Activated CD4-positive, alpha-beta T cell treated with anti-CD3 and anti-CD28 coated beads, Interleukin-2, amount 10 ng/mL, durations not matched to agents 24 days and 14 days (primary cell): ENCODE measurements at regions of chr14 and their contacts with region 1.

Region 1: GRCh38 chr14:103715052-103716000 is at the starts of genes XRCC3 and ZFYVE21:
- DNase-seq: peak; percentile 100
- H3K4me3 Mint-ChIP-seq: peak within 1 kb of the TSS; percentile 94
- H3K27ac Mint-ChIP-seq: peak within 1 kb of the TSS; percentile 93
- H3K4me1 Mint-ChIP-seq: peaks cover 37% of the 10 kb centered on the region
- H3K27me3 Mint-ChIP-seq: no peaks in the 10 kb centered on the region
- total RNA-seq, gene XRCC3: 70.3 and 75.8 TPM in 2 replicates
- total RNA-seq, gene ZFYVE21: 21.4 and 23.9 TPM in 2 replicates

Region 2: GRCh38 chr14:103301512-103302354 is 413.6 kb before region 1 on chr14:
- intact Hi-C with region 1: no loop called
- DNase-seq: no peak
- H3K4me3 Mint-ChIP-seq: no peak overlapping the region
- H3K27ac Mint-ChIP-seq: no peak overlapping the region
- H3K4me1 Mint-ChIP-seq: no peaks in the 10 kb centered on the region
- H3K27me3 Mint-ChIP-seq: peaks cover 13% of the 10 kb centered on the region

Region 3: GRCh38 chr14:103562429-103563225 is 152.7 kb before region 1 on chr14 and contains the starts of genes BAG5 and COA8:
- intact Hi-C with region 1: loop called (anchors 2 kb)
- DNase-seq: peak; percentile 96
- H3K4me3 Mint-ChIP-seq: peak within 1 kb of the TSS; percentile 100
- H3K27ac Mint-ChIP-seq: peak within 1 kb of the TSS; percentile 91
- H3K4me1 Mint-ChIP-seq: peaks cover 41% of the 10 kb centered on the region
- H3K27me3 Mint-ChIP-seq: no peaks in the 10 kb centered on the region
- total RNA-seq, gene BAG5: 32.1 and 33.9 TPM in 2 replicates
- total RNA-seq, gene COA8: 38.4 and 41.2 TPM in 2 replicates

Region 4: GRCh38 chr14:103576371-103577024 is 138.8 kb before region 1 on chr14:
- intact Hi-C with region 1: no loop called
- DNase-seq: no peak
- H3K4me3 Mint-ChIP-seq: no peak overlapping the region
- H3K27ac Mint-ChIP-seq: no peak overlapping the region
- H3K4me1 Mint-ChIP-seq: peaks cover 2% of the 10 kb centered on the region
- H3K27me3 Mint-ChIP-seq: no peaks in the 10 kb centered on the region

Region 5: DNA sequence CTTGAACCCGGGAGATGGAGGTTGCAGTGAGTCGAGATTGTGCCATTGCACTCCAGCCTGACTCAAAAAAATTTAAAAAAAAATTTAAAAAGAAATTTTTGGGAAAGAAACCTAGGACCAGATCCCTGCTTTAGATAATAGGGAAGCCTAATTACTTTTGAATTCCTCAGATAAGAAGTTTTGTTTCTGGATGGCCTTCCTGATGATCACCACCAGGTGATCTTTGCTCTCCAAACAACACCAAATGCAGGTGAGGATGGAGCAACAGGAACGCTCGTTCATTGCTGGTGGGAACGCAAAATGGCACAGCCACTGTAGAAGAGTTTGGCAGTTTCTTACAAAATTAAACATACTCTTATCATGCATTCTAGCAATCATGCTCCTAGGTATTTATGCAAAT is 114.8 kb before region 1 on chr14:
- intact Hi-C with region 1: no loop called
- DNase-seq: no peak
- H3K4me3 Mint-ChIP-seq: no peak overlapping the region
- H3K27ac Mint-ChIP-seq: no peak overlapping the region
- H3K4me1 Mint-ChIP-seq: peaks cover 2% of the 10 kb centered on the region
- H3K27me3 Mint-ChIP-seq: no peaks in the 10 kb centered on the region

Region 6: DNA sequence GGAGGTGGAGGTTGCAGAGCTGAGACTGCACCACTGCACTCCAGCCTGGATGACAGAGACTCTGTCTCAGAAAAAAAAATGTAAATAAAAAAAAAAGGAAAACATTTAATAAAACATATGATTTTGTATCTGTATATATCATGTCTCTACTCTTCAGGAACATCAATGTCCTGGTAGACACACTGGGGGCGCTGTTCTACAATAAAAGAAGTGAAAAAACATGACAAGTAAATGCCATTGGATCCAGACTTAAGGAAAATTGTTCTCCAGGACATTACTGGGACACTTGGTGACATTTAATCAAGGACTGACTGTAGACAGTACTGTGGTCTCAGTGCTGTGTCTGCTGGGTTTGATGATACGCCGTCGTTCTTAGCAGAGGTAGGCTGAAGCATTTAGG is 101.8 kb before region 1 on chr14:
- intact Hi-C with region 1: no loop called
- DNase-seq: peak; percentile 65
- H3K4me3 Mint-ChIP-seq: no peak overlapping the region
- H3K27ac Mint-ChIP-seq: no peak overlapping the region
- H3K4me1 Mint-ChIP-seq: no peaks in the 10 kb centered on the region
- H3K27me3 Mint-ChIP-seq: peaks cover 6% of the 10 kb centered on the region

Region 7: GRCh38 chr14:103628684-103629502 is 86.4 kb before region 1 on chr14 and contains the start of gene KLC1:
- intact Hi-C with region 1: loop called (anchors 2 kb)
- DNase-seq: peak; percentile 96
- H3K4me3 Mint-ChIP-seq: peak within 1 kb of the TSS; percentile 91
- H3K27ac Mint-ChIP-seq: peak within 1 kb of the TSS; percentile 95
- H3K4me1 Mint-ChIP-seq: peaks cover 27% of the 10 kb centered on the region
- H3K27me3 Mint-ChIP-seq: no peaks in the 10 kb centered on the region
- total RNA-seq, gene KLC1: 132 and 155 TPM in 2 replicates

Region 8: DNA sequence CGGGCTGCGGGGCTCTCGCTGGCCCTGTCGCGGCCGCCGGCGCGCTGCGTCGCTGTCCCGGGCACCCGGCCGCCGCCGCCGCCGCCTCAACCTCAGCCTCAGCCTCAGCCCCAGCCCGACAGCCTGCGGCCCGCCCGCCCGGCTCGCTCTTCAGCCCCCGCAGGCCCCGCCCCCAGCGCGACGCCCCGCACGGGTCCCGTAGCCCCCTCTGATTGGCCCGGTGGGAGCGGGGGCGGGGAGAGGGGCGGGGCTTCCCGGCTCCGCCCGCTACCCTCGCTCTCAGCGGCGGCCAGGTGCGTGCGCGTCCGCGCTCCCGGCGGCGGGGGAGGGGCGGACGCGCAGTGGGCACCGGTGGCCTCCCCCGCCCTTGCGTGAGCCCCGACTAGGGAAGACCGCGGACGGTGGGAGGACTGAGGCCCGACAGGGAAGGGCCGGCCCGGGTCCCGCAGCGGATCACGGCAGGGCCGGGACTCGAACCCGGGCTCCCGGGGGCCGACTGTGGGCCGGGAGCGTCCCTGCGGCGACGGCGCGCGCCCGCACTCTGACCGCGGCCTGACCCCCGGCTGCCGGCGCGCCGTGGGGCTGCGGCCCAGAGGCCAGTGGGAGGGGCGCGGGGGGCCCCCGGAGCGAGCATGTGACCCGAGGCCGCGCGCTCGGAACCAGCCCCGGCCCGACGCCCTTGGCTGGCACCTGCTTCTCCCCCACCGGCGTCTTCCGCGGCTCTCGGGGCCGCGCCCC is 132.3 kb after region 1 on chr14 and contains the start of gene PPP1R13B:
- intact Hi-C with region 1: loop called (anchors 2 kb)
- DNase-seq: peak; percentile 97
- H3K4me3 Mint-ChIP-seq: peak within 1 kb of the TSS; percentile 80
- H3K27ac Mint-ChIP-seq: peak within 1 kb of the TSS; percentile 1
- H3K4me1 Mint-ChIP-seq: peaks cover 13% of the 10 kb centered on the region
- H3K27me3 Mint-ChIP-seq: peaks cover 29% of the 10 kb centered on the region
- total RNA-seq, gene PPP1R13B: 8.6 and 8.8 TPM in 2 replicates

Region 9: DNA sequence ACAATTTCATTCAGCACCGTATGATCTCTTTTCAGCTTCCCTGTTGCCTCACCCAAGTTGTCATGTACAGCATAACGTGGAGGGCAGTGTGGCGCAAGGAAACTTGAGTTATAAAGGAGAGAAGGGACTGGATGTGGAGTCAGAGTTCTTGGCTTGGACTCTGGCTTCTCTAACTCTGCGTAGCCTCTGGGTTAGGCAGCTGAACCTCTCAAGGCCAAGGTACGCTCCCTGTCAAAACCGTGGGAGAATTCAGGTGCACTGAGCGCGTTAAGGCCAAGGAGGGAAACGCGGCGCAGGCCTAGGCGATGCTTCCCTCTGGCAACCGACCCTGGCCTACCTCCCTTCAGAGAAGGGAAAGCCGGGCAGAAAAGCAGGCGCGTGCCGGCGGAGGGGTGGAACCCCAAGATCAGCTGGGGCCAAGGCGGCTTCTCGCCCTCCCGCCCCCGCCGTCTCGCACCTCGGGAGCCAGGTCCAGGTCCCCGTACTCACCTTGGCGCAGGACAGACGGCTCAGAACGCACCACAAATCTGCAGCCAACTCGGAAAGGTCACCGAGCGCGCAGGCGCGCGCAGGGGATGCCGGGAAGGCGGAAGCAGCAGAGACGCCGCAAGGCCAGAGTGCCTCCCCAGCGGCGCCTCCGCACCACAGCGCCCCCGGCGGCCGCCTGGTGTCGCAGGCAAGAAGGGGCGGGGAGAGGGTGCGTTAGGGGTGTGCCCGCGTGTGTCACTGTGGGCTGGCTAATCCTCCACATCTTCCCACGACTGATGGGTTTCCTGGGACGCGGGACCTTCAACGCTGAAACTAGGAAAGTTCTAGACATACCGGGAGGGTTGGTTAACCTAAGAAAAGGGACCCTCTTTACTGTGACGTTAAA is 205.9 kb after region 1 on chr14:
- intact Hi-C with region 1: loop called (anchors 1 kb)
- DNase-seq: peak; percentile 99
- H3K4me3 Mint-ChIP-seq: peak overlapping the region; percentile 93
- H3K27ac Mint-ChIP-seq: peak overlapping the region; percentile 87
- H3K4me1 Mint-ChIP-seq: peaks cover 9% of the 10 kb centered on the region
- H3K27me3 Mint-ChIP-seq: peaks cover 9% of the 10 kb centered on the region